Vagina (tissue), 2 donors: ENCODE measurements at regions of chr12 and their contacts with region 1.

Region 1: GRCh38 chr12:116277393-116278278 is at the start of gene MED13L:
- DNase-seq: no peak
- H3K4me3 ChIP-seq: peak within 1 kb of the TSS; percentile 71 to 77
- H3K27ac ChIP-seq: peak within 1 kb of the TSS; percentile 91
- H3K4me1 ChIP-seq: peaks cover 35% of the 10 kb centered on the region
- H3K27me3 ChIP-seq: no peaks in the 10 kb centered on the region
- CTCF ChIP-seq: peak in 1 of 3 experiments; percentile 45
- POLR2A ChIP-seq: peak in 1 of 2 donors; percentile 33
- total RNA-seq, gene MED13L: 161 TPM

Region 2: GRCh38 chr12:116406516-116406915 is 128.9 kb after region 1 on chr12:
- intact Hi-C with region 1: loop called (anchors 10 kb)
- DNase-seq: peak in 1 of 2 donors; percentile 95
- H3K4me3 ChIP-seq: no peak overlapping the region
- H3K27ac ChIP-seq: no peak overlapping the region
- H3K4me1 ChIP-seq: peaks cover 46% of the 10 kb centered on the region
- H3K27me3 ChIP-seq: no peaks in the 10 kb centered on the region
- CTCF ChIP-seq: no peak
- POLR2A ChIP-seq: no peak